GM12878 (cell line): ENCODE measurements at regions of chr17 and their contacts with region 1.

Region 1: DNA sequence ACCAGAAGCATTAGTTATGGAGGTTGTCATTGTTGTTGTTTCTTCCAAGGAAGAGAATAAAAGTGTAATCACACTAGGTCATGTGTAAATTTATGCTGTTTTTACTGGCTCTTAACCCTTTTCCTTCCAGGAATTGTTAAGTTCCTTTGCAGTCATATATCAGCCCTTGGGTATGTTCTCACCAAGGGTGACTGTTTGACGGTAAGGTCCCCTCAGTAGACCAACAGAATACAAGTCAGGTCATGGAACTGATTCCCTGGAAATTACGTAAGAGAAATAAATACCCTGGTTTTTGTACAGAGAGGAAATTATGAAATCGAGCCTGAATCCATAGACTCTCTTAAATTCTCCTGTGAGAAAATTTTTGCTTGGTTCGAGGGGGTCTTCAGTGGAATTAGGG is 11.2 kb upstream of the KCNJ2 start:
- DNase-seq: no peak
- ATAC-seq: no peak
- H3K4me3 ChIP-seq: no peak overlapping the region
- H3K27ac ChIP-seq: no peak overlapping the region
- H3K4me1 ChIP-seq: no peaks in the 10 kb centered on the region
- H3K27me3 ChIP-seq: no peaks in the 10 kb centered on the region
- CTCF ChIP-seq: no peak
- EP300 ChIP-seq: no peak
- POLR2A ChIP-seq: no peak
- RAD21 ChIP-seq: no peak

Region 2: GRCh38 chr17:70089513-70090148 is 68.5 kb before region 1 on chr17:
- CTCF ChIA-PET with region 1: no interaction called
- POLR2A ChIA-PET with region 1: no interaction called
- RAD21 ChIA-PET with region 1: no interaction called
- SMC1A ChIA-PET with region 1: no interaction called
- in situ Hi-C with region 1: no loop called
- intact Hi-C with region 1: loop called (anchors 10 kb)
- DNase-seq: no peak
- ATAC-seq: no peak
- H3K4me3 ChIP-seq: no peak overlapping the region
- H3K27ac ChIP-seq: no peak overlapping the region
- H3K4me1 ChIP-seq: no peaks in the 10 kb centered on the region
- H3K27me3 ChIP-seq: no peaks in the 10 kb centered on the region
- CTCF ChIP-seq: no peak
- EP300 ChIP-seq: no peak
- POLR2A ChIP-seq: no peak
- RAD21 ChIP-seq: no peak

Region 3: GRCh38 chr17:70119983-70120382 is 38.2 kb before region 1 on chr17:
- CTCF ChIA-PET with region 1: no interaction called
- POLR2A ChIA-PET with region 1: no interaction called
- RAD21 ChIA-PET with region 1: no interaction called
- SMC1A ChIA-PET with region 1: no interaction called
- in situ Hi-C with region 1: no loop called
- intact Hi-C with region 1: no loop called
- DNase-seq: no peak
- ATAC-seq: no peak
- H3K4me3 ChIP-seq: no peak overlapping the region
- H3K27ac ChIP-seq: no peak overlapping the region
- H3K4me1 ChIP-seq: no peaks in the 10 kb centered on the region
- H3K27me3 ChIP-seq: no peaks in the 10 kb centered on the region
- CTCF ChIP-seq: no peak
- EP300 ChIP-seq: no peak
- POLR2A ChIP-seq: no peak
- RAD21 ChIP-seq: no peak

Region 4: GRCh38 chr17:70478902-70479301 is 320.7 kb after region 1 on chr17:
- CTCF ChIA-PET with region 1: no interaction called
- POLR2A ChIA-PET with region 1: no interaction called
- RAD21 ChIA-PET with region 1: no interaction called
- SMC1A ChIA-PET with region 1: no interaction called
- in situ Hi-C with region 1: no loop called
- intact Hi-C with region 1: no loop called
- DNase-seq: no peak
- ATAC-seq: no peak
- H3K4me3 ChIP-seq: no peak overlapping the region
- H3K27ac ChIP-seq: no peak overlapping the region
- H3K4me1 ChIP-seq: no peaks in the 10 kb centered on the region
- H3K27me3 ChIP-seq: no peaks in the 10 kb centered on the region
- CTCF ChIP-seq: no peak
- EP300 ChIP-seq: no peak
- POLR2A ChIP-seq: no peak
- RAD21 ChIP-seq: no peak